Heart left ventricle (tissue), 16 donors: ENCODE measurements at regions of chr11 and their contacts with region 1.

Region 1: DNA sequence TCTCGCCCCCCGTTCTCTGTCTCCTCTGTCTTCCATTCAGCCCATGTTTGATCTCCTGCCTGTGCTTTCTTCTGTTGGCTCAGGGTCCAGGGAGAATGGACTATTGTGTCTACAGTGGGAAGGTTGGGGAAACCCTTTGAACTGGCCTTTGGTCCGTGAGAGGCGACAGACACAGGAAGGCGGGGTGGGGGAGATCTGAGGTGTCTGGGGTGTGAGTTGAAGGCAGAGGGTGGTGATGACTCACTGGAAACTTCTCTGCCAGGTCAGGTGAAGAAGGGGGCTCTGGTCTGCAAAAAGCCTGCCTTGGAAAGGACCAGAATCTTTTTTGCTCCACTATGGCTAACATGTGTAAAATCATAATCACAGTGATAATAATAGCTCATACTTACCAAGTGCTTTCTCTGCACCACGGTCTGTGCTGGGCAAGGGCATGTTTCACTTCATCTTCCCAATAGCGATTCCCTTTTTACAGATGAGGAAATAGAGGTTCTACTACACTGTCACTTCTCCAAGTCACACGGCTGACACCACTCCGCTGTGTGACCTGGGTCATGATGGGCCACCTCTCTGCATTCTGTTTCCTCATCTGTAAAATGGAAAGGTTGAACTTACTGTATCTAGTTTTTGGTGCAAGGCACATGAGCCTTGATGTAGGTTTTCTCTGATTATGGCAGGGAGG is 99.8 kb upstream of the ALX4 start:
- DNase-seq: no peak
- ATAC-seq: no peak
- H3K4me3 ChIP-seq: no peak overlapping the region
- H3K27ac ChIP-seq: no peak overlapping the region
- H3K4me1 ChIP-seq: no peaks in the 10 kb centered on the region
- H3K27me3 ChIP-seq: peaks cover 0 to 8% (median 0%) of the 10 kb centered on the region in 9 donors
- CTCF ChIP-seq: no peak
- POLR2A ChIP-seq: no peak

Region 2: GRCh38 chr11:44333271-44334218 is 76.2 kb before region 1 on chr11:
- intact Hi-C with region 1: no loop called
- DNase-seq: no peak
- ATAC-seq: no peak
- H3K4me3 ChIP-seq: no peak overlapping the region
- H3K27ac ChIP-seq: no peak overlapping the region
- H3K4me1 ChIP-seq: no peaks in the 10 kb centered on the region
- H3K27me3 ChIP-seq: peaks cover 0 to 70% (median 14%) of the 10 kb centered on the region in 9 donors
- CTCF ChIP-seq: no peak
- POLR2A ChIP-seq: no peak

Region 3: DNA sequence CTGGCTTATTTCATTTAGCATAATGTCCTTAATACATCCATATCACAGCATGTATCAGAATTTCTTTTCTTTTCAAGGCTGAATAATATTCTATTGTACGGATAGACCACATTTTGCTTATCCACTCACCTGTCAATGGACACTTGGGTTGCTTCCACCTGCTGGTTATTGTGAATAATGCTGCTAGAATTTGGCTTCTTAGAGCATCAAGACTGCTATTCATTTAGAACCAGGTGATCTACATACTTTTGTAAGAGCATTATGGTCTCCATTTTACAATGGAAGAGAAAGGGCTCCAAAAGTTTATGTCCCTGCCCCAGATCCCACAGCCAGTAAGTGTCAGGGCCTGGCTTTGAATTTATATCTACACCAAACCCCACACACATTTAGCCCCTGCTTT is 55.0 kb after region 1 on chr11:
- intact Hi-C with region 1: loop called in 1 of 10 experiments (anchors 10 kb)
- DNase-seq: no peak
- ATAC-seq: no peak
- H3K4me3 ChIP-seq: no peak overlapping the region
- H3K27ac ChIP-seq: no peak overlapping the region
- H3K4me1 ChIP-seq: peaks cover 0 to 4% (median 0%) of the 10 kb centered on the region in 12 donors
- H3K27me3 ChIP-seq: no peaks in the 10 kb centered on the region
- CTCF ChIP-seq: no peak
- POLR2A ChIP-seq: no peak

Region 4: DNA sequence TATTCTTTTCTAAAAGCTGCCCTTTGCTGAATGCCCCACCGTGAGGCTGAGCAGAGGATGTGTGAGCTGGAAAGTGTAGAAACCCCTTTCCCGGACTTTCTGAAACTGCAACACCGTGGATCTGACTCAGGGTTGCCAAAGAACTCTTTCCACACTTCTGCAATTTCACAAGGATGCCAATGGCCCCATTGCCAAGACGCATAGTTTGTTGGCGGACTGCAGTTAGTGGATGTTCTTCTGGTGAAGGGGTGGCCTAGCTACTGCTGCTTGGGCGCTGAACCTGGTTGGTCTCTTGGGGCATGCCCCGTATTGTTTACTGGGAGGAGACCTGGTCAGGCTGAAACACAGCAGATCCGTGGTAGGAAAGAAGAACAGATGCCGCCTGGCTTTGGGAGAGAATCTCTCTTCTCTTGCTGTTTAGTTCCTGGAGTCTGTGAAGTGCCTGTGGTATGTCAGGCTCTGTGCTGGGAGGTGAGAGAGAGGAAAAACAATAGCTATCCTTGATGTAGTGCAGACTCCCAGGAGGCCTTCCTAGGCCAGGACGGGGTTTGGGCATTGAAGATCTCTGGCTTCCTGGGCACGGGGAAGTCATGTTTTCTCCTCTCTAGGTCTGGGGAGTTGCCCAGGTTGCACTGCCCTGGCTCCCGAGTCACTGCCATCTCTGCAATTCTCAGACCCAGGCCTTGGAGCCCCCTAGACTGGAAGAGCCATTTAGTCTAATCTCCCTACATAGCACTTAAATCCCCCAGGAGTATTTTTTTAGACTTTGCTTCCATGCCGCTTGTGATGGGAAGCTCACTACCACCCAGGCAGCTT is 182.6 kb after region 1 on chr11:
- intact Hi-C with region 1: no loop called
- DNase-seq: no peak
- ATAC-seq: peak in 1 of 4 donors; percentile 26
- H3K4me3 ChIP-seq: no peak overlapping the region
- H3K27ac ChIP-seq: peak overlapping the region in 5 of 12 donors; percentile 12 to 85 (median 34)
- H3K4me1 ChIP-seq: peaks cover 0 to 50% (median 30%) of the 10 kb centered on the region in 12 donors
- H3K27me3 ChIP-seq: no peaks in the 10 kb centered on the region
- CTCF ChIP-seq: no peak
- POLR2A ChIP-seq: no peak

Region 5: DNA sequence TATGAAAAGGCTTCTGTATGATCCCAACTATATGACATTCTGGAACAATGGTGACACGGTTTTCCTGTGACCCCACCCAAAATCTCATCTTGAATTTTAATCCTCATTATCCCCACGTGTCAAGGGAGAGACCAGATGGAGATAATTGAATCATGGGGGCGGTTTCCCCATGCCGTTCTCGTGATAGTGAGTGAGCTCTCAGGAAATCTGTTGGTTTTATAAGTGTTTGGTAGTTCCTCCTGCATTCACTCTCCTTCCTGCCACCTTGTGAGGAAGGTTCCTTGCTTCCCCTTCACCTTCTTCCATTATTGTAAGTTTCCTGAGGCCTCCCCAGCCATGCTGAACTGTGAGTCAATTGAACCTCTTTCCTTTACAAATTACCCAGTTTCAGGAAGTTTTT is 264.0 kb after region 1 on chr11:
- intact Hi-C with region 1: no loop called
- DNase-seq: no peak
- ATAC-seq: no peak
- H3K4me3 ChIP-seq: no peak overlapping the region
- H3K27ac ChIP-seq: no peak overlapping the region
- H3K4me1 ChIP-seq: no peaks in the 10 kb centered on the region
- H3K27me3 ChIP-seq: no peaks in the 10 kb centered on the region
- CTCF ChIP-seq: no peak
- POLR2A ChIP-seq: no peak